Mammary epithelial cell (primary cell): ENCODE measurements at regions of chr17 and their contacts with region 1.

Region 1: DNA sequence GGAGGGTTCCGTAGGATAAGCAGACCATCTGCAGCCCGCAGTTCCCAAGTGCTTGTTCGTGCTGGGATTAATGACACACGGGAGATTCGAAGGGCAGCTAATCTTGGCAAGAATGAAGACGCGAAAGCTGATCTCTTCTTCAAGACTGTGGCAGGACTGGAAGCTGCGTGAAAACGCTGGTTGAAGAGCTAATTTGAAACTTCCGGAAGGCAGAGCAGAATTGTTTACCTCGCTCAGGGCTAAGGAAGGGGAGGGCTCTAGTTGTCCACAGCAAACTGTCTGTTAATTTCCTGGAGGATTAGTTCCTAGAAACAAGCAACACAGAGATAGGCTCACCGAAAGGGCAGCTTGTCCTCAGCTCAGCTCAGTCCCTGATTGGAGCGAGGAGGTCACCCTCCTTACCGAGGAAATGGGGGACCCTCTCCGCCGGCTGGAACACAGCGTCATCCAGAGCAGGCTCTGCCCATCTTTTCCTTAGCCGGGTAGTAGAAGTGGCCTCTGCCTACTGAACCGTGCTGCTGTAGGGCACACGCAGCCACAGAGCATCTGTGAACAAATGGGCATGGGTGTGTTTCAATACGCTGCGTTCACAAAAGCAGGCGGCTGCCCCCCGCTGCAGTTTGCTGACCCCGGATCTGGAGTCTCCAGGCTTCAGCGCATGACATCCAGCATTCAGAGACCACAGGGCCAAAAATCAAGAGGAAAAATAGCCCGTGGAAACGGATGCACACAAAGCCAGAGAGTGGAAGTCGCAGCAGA is 16.7 kb upstream of the BAIAP2 start:
- DNase-seq: no peak
- H3K4me3 ChIP-seq: no peak overlapping the region
- H3K27ac ChIP-seq: no peak overlapping the region
- H3K4me1 ChIP-seq: peaks cover 13% of the 10 kb centered on the region
- H3K27me3 ChIP-seq: no peaks in the 10 kb centered on the region
- CTCF ChIP-seq: no peak

Region 2: DNA sequence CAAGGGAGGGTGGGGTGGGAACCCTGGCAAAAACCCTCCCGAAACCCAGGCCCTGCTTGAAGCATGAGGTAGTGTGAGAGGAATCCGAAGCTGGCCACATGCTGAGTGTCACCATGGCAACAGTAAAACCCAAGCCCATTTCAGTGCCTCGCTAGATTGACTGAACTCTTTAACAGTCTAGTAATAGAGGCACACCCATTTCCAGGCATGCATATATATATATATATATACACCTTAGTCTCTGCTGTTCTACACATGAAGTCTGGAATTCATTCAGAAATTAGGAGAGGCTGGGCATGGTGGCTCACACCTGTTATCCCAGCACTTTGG is 86.3 kb before region 1 on chr17:
- CTCF ChIA-PET with region 1: no interaction called
- dilution Hi-C with region 1: loop called (anchors 5 kb)
- in situ Hi-C with region 1: no loop called
- intact Hi-C with region 1: no loop called
- DNase-seq: peak; percentile 25
- H3K4me3 ChIP-seq: no peak overlapping the region
- H3K27ac ChIP-seq: no peak overlapping the region
- H3K4me1 ChIP-seq: no peaks in the 10 kb centered on the region
- H3K27me3 ChIP-seq: peaks cover 1% of the 10 kb centered on the region
- CTCF ChIP-seq: no peak

Region 3: DNA sequence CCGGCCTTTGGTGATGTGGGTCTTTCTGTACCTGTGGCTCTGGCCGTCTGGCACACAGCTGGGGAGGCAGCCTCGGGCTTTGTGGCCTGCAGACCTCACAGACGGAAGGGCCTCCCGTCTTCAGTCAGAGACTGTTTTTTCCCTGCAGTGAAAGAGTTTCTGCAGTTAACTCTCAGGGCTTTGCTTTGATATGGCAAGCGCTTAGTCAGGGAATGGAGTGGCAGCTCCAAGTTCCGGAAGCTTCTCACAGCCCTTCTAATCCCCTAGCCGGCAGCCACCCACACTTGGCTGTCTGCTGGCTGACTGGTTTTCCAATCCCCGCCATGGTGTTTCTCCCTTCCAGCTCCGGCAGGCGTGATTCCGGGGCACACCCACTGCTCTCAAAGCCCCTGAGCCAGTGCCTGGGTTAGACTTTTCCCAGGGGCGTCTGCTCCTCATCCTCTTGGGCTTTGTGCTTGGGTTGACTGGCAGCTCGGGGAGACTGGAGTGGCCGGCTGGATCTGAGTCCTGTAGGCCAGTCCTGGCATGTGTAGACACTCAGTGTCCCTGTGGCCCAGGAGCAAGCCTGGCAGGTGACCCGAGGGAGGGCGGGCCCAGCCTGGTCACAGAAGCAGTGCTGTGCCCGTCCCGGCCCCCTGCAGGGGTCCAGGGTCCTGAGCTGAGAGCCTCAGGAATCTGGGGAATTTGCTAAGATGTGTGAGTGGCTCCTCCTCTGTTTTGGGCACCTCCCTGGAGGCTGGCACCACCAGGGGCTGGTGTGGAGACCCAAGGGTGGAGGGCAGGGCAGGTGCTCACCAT is 46.7 kb after region 1 on chr17:
- CTCF ChIA-PET with region 1: interaction called, 3 read pairs
- dilution Hi-C with region 1: loop called (anchors 5 kb)
- in situ Hi-C with region 1: no loop called
- intact Hi-C with region 1: no loop called
- DNase-seq: no peak
- H3K4me3 ChIP-seq: no peak overlapping the region
- H3K27ac ChIP-seq: peak overlapping the region; percentile 56
- H3K4me1 ChIP-seq: peaks cover 44% of the 10 kb centered on the region
- H3K27me3 ChIP-seq: no peaks in the 10 kb centered on the region
- CTCF ChIP-seq: no peak

Region 4: GRCh38 chr17:81101614-81102306 is 83.5 kb after region 1 on chr17:
- CTCF ChIA-PET with region 1: interaction called, 7 read pairs
- dilution Hi-C with region 1: no loop called
- in situ Hi-C with region 1: no loop called
- intact Hi-C with region 1: loop called (anchors 1 kb)
- DNase-seq: peak; percentile 63
- H3K4me3 ChIP-seq: no peak overlapping the region
- H3K27ac ChIP-seq: no peak overlapping the region
- H3K4me1 ChIP-seq: peaks cover 20% of the 10 kb centered on the region
- H3K27me3 ChIP-seq: no peaks in the 10 kb centered on the region
- CTCF ChIP-seq: peak; percentile 99 to 100

Region 5: DNA sequence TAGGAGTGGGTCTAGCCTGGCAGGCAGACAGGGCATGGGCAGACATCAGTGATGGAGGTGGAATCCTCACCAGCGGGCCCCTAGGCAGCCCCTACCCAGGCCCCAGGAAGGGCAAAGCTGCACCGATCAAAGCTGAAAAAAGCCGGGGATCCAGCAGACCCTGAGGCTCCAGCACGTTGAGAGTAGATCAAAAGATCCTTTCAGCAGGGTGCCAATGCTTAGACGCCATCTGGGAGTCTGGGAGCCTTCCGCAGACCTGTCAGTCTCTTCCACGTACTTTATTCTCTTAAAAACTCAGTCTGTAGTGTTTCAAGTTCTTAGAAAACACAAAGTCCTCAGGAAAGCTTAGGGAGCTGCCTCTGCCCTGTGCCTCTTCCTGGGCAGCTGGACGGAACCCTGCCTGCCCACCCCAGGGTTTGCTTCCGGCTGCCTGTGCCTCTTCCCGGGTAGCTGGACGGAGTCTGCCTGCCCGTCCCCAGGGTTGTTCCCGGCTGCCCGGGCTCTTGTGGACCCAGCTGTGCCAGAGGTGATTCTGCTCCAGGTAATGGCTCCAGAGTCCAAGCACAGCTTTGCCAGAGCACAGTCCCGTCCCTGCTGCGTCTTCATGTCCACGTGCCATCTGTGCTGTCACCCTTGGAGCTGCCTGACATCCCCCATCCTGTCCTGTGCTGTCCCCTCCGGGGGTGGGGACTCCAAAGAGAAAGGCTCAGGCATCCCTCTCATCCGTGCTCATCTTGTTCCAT is 96.3 kb after region 1 on chr17:
- CTCF ChIA-PET with region 1: interaction called, 5 read pairs
- dilution Hi-C with region 1: loop called (anchors 5 kb)
- in situ Hi-C with region 1: no loop called
- intact Hi-C with region 1: no loop called
- DNase-seq: no peak
- H3K4me3 ChIP-seq: no peak overlapping the region
- H3K27ac ChIP-seq: no peak overlapping the region
- H3K4me1 ChIP-seq: peaks cover 16% of the 10 kb centered on the region
- H3K27me3 ChIP-seq: no peaks in the 10 kb centered on the region
- CTCF ChIP-seq: no peak

Region 6: GRCh38 chr17:81222906-81223761 is 204.9 kb after region 1 on chr17 and contains the start of gene CEP131:
- CTCF ChIA-PET with region 1: interaction called, 4 read pairs
- dilution Hi-C with region 1: no loop called
- in situ Hi-C with region 1: loop called in 1 of 2 experiments (anchors 25 kb)
- intact Hi-C with region 1: loop called (anchors 10 kb)
- DNase-seq: peak; percentile 98
- H3K4me3 ChIP-seq: peak within 1 kb of the TSS; percentile 79 to 84 (median 83)
- H3K27ac ChIP-seq: peak within 1 kb of the TSS; percentile 31
- H3K4me1 ChIP-seq: peaks cover 26% of the 10 kb centered on the region
- H3K27me3 ChIP-seq: no peaks in the 10 kb centered on the region
- CTCF ChIP-seq: no peak
- total RNA-seq, gene CEP131: 8.7 to 13.1 TPM

Region 7: GRCh38 chr17:81238817-81239600 is 220.8 kb after region 1 on chr17 and contains the starts of genes NDUFAF8 and TEPSIN:
- CTCF ChIA-PET with region 1: no interaction called
- dilution Hi-C with region 1: no loop called
- in situ Hi-C with region 1: loop called in 1 of 2 experiments (anchors 25 kb)
- intact Hi-C with region 1: no loop called
- DNase-seq: peak; percentile 100
- H3K4me3 ChIP-seq: peak within 1 kb of the TSS; percentile 71 to 94 (median 91)
- H3K27ac ChIP-seq: peak within 1 kb of the TSS; percentile 75
- H3K4me1 ChIP-seq: peaks cover 19% of the 10 kb centered on the region
- H3K27me3 ChIP-seq: no peaks in the 10 kb centered on the region
- CTCF ChIP-seq: no peak
- total RNA-seq, gene NDUFAF8: 14.7 to 98.1 TPM
- total RNA-seq, gene TEPSIN: 15.7 to 25.7 TPM